ENCODE measurements at regions of chr3 and their contacts with region 1.

Region 1: GRCh38 chr3:53160660-53161449 is at the start of gene PRKCD:
- DNase-seq: peak; percentile 89
- H3K4me3 ChIP-seq: peak within 1 kb of the TSS; percentile 96
- H3K27ac ChIP-seq: peak within 1 kb of the TSS; percentile 94
- H3K4me1 ChIP-seq: peaks cover 73% of the 10 kb centered on the region
- CTCF ChIP-seq: peak; percentile 63
- total RNA-seq, gene PRKCD: 9.5 and 13.3 TPM in 2 replicates

Region 2: GRCh38 chr3:53130179-53131061 is 30.4 kb before region 1 on chr3 and contains the start of gene RFT1:
- CTCF ChIA-PET with region 1: interaction called, 6 read pairs
- POLR2A ChIA-PET with region 1: interaction called, 10 read pairs
- intact Hi-C with region 1: no loop called
- DNase-seq: peak; percentile 97
- H3K4me3 ChIP-seq: peak within 1 kb of the TSS; percentile 96
- H3K27ac ChIP-seq: peak within 1 kb of the TSS; percentile 65
- H3K4me1 ChIP-seq: peaks cover 35% of the 10 kb centered on the region
- CTCF ChIP-seq: no peak
- total RNA-seq, gene RFT1: 9.9 and 15.8 TPM in 2 replicates